GM18951 (cell line): ENCODE measurements at regions of chr1 and their contacts with region 1.

Region 1: DNA sequence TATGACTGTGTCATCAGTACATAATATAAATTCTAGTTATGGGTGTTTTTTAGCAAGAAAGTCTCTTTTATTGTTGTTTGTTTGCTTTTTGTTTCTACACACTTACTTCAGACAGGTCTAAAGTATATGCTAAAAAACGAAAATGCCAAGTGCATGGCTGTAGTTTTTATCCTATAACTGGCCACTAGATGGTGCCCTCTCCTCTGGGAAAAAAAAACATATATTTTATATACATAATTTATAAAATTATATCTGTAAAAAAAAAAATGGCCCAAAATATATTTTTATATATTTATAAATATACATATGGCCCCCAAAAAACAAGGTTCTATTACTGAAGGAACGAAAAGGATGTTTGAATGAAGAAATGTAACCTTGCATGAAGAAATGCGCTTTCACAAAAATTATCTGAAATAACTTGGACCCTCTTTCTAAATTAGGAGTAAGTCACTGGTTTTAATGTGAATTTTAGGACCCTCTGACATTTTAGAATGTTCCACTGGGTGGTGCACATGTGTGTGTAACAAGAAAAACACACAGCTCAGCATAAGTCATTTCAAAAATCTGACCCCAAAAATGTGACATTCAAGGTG is 93.5 kb downstream of the TTLL7 start:
- POLR2A ChIP-seq: no peak

Region 2: DNA sequence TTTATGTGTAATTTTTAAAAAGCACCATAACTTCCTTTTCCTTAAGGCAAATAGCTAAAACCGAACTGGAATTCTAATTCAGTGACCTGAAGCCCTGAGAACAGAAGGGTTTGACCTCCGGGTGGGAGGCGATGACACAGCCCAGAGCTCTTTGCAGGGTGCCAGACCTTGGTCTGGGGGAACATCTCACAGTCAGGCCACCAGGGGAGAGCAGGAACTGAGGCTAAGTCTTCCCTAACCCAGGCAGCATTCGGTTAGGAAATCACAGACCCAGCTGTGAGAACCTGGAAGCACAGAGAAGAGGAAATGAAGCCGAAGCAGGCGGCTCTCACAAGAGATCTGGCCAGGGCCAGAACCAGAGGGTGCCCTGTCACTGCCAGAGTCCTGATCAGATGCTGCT is 351.2 kb before region 1 on chr1:
- in situ Hi-C with region 1: no loop called
- POLR2A ChIP-seq: no peak

Region 3: GRCh38 chr1:84077476-84078107 is 172.2 kb after region 1 on chr1:
- in situ Hi-C with region 1: no loop called
- POLR2A ChIP-seq: peak; percentile 65

Region 4: DNA sequence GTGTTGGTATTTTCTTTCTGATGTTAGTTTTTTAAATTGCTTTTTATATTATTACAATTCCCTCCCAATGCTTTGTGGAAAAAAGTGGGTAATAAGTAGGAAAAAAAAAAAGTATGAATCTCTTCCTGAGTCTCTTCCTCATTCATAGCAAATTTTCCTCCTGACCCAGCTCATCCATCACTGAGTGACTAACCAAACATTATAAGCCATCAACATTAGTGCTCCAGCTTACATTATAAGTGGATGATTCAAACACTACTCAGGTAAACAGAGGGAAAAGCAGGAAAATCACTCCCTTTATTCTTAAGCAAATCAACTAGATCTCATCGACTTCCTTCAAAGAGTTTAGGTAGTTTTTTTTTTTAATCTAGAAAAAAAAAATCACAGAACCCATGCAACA is 380.7 kb after region 1 on chr1:
- in situ Hi-C with region 1: no loop called
- POLR2A ChIP-seq: no peak

Region 5: DNA sequence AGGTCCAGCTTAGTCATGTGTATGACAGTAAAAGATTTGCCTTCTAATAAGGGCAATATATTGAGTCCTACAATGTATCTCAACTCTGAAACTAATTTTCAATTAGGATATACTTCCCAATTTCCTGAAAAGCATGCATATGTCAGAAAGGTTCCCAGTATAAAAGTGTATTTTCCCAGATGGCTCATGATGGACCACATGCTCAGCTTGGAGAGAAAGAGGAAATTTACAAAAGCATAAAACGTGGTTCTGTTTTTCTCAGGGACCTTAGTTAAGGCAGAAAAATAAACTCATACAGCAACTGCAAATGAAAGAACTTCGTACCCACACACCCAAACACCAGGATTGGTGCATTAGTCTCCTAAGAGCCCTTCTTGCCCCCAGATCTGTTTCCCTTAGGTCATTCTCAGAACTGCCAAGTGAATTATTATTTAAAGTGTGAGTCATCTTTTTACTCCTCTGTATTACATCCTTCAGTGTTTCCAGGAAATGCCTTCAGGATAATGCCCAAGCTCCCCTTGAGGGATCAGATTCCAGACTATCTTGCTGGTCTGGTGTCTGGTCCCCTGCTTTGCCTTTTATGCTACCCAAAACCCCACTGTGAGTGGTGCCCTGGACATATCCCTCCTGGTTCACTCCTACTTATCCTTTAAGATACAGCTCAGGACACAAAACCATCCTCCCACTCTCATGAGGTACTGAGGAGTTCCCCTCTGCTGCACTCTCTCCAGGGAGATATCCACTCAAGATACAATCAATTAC is 727.4 kb after region 1 on chr1:
- in situ Hi-C with region 1: loop called (anchors 25 kb)
- POLR2A ChIP-seq: no peak

Region 6: GRCh38 chr1:84753516-84754385 is 848.3 kb after region 1 on chr1:
- in situ Hi-C with region 1: loop called (anchors 25 kb)
- POLR2A ChIP-seq: no peak